ENCODE measurements at regions of chr7 and their contacts with region 1.

Region 1: DNA sequence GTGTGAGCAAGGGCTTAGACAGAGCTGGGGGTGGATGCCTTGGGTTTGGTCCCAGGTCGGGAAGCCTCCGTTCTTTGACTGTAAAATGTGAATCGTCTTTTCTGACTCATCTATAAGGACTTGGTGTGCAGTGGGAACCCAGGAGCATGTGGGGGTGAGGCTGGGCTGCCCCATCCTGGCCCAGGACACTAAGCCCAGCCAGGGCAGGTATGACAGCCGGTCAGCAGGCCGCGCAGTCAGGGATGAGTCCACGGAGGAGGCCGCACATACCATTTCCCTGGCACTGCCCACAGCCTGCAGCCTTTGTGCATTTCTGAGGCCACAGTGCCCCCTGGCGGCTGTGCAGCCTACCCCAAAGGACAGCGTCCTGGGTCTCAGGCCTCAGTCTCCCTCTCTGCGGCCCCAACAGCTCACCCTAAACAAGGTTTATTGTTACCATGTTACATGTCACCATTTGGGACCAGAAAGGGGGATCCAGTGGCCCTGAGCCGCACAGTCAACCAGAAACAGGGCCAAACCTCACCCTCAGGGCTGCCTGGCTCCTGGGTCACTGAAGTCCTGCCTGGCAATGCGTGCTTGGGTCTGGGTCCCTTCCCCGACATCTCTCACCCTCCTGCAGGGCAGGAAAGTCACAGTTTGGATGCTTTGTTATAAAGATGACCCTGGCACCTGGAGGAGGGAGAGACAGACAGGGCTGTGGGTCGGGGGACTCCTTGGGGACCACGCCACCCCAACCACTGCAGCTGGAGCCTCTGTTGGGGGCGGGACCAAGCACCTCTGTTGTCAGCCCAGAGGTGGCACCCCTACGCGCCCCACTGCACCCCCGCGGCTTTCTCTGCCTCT is 14.4 kb upstream of the SH2B2 start:
- DNase-seq: peak; percentile 55 to 97 (median 87)

Region 2: DNA sequence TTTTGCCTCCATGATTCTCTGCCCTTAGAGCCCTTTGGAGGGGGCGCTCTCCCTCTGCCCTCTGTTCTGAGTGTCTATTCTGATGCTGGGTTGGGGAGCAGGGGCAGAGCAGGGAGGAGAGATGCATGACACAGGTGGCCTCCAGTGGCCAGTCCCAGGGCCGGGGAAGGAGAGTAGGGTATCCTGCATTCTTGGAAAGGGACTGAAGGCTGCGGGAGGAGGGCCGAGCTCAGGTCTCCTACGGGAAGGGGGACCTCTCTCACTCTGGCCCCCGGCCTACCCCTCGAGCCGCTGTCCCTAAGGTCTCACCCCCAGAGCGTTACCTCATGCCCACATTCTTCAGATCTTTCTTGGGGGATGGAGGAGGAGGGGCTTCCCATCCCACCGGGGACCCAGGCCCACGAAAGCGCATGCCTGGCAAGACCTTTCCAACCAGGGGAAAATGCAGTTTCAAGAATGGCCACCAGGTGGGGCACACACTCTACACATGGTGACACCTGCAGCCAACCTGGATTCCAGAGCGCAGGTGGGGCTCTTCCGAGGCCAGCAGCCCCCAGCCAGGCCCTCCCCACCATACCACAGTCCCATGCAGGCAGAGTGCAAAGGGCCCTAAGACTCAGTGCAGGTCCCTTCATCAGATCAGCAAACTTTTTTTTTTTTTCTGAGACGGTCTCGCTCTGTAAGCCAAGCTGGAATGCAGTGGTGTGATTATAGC is 729.6 kb before region 1 on chr7:
- intact Hi-C with region 1: loop called (anchors 1 kb)
- DNase-seq: peak; percentile 52 to 92 (median 76)

Measured in posterior cingulate gyrus (tissue), 11 donors.